AG04449 (cell line): ENCODE measurements at regions of chr14 and their contacts with region 1.

Region 1: DNA sequence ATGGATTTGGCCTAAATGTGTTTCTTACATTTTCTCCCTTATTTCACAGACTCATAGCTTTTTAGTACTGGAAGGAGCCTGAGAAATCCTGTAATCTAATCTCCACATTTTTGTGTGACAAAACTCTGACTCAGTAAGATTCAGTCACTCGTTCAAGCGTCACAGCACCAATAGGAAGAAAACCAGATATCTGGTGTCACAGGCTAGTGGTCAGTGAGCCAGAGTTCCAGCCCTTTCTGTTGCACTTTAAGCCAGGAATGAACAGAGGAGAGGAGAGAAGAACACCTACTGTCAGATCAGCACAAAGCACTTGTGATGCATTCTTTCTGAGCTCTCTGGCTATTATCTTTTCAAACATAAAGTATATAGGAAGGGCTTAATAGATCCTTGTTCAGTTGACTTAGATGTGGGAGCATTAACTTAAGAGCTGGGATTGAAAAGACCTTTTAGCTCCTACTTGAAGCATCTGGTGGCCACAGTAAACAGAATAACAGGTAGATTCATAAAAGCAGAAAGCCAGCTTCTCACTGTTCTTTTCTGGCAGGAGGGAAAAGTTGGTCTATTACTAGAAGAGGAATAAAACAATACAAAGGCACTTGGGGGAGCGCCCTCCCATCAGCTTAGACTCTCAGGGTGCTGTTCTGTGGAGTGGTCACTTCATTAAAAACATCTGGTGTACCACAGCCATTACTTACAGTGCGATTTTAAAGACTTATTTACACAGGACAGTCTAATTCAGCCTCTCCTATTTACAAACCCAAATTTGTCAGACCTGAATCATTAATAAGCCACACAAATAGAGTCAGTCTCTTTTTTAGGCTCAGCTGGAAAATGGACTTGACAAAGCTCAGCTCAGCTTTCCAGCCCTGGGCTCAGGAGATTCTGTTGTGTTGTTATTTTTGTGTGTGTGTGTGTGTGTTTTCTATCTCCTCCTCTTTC is 12.2 kb upstream of the NID2 start:
- DNase-seq: peak; percentile 72
- H3K4me3 ChIP-seq: no peak overlapping the region
- CTCF ChIP-seq: no peak

Region 2: GRCh38 chr14:51954657-51955056 is 126.4 kb before region 1 on chr14:
- CTCF ChIA-PET with region 1: no interaction called
- POLR2A ChIA-PET with region 1: no interaction called
- DNase-seq: no peak
- H3K4me3 ChIP-seq: no peak overlapping the region
- CTCF ChIP-seq: no peak

Region 3: GRCh38 chr14:52068615-52069303 is 12.3 kb before region 1 on chr14 and contains the start of gene NID2:
- CTCF ChIA-PET with region 1: interaction called, 28 read pairs
- POLR2A ChIA-PET with region 1: interaction called, 15 read pairs
- DNase-seq: no peak
- H3K4me3 ChIP-seq: peak within 1 kb of the TSS; percentile 88
- CTCF ChIP-seq: no peak